Activated CD4-positive, alpha-beta T cell treated with anti-CD3 and anti-CD28 coated beads for 36 hours (primary cell): ENCODE measurements at regions of chr5 and their contacts with region 1.

Region 1: GRCh38 chr5:140564196-140565023 is at the starts of genes APBB3 and SLC35A4:
- DNase-seq: peak; percentile 96
- ATAC-seq: peak; percentile 95
- H3K4me3 Mint-ChIP-seq: peak within 1 kb of the TSS; percentile 98
- H3K27ac Mint-ChIP-seq: peak within 1 kb of the TSS; percentile 99
- H3K4me1 Mint-ChIP-seq: peaks cover 49% of the 10 kb centered on the region
- H3K27me3 Mint-ChIP-seq: no peaks in the 10 kb centered on the region
- total RNA-seq, gene APBB3: 12.8 to 19.0 TPM
- total RNA-seq, gene SLC35A4: 61.8 to 65.4 TPM

Region 2: DNA sequence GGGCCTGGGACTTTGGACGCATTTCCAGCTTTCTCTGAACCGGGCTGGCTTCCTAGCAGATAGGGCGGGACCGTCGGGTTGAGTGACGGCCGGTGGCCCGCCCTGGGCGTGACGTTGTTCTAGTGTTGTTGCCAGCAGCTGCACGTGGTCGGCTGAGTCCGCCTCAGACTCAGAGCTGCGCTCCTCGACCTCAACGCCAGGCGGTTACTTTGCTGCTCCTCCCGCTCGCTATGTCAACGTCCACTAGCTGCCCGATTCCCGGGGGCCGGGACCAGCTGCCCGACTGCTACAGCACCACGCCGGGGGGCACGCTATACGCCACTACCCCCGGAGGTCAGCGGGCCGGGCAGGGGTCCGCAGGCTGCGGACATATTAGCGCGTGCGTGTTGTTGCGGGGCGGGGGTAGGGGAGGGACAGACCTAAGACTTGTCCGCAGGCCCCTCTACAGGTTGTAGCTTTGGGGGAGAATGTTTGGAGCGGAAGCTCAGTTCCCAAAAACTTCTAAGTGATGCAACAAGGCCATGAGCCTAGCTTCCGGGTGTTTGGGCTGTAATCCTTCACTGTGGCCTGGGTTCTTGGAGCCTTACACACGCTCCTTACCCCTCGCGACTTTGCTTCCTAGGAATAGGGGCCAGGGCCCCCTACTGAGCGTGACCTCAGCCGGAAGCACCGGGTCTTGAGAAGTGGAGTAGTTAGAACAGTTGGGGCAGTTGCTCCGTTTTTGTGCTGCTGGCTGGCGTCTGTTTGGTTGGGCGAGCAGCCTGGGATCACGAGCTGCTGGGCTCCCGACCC is 16.7 kb before region 1 on chr5 and contains the start of gene EIF4EBP3:
- CTCF ChIA-PET with region 1: interaction called, 5 read pairs
- POLR2A ChIA-PET with region 1: no interaction called
- intact Hi-C with region 1: loop called (anchors 1 to 2 kb)
- DNase-seq: peak; percentile 93
- ATAC-seq: peak; percentile 99
- H3K4me3 Mint-ChIP-seq: peak within 1 kb of the TSS; percentile 82
- H3K27ac Mint-ChIP-seq: peak within 1 kb of the TSS; percentile 93
- H3K4me1 Mint-ChIP-seq: peaks cover 38% of the 10 kb centered on the region
- H3K27me3 Mint-ChIP-seq: no peaks in the 10 kb centered on the region
- total RNA-seq, gene EIF4EBP3: 15.8 to 17.3 TPM

Region 3: GRCh38 chr5:140639148-140639979 is 75.0 kb after region 1 on chr5 and contains the start of gene TMCO6:
- CTCF ChIA-PET with region 1: interaction called, 7 read pairs
- POLR2A ChIA-PET with region 1: no interaction called
- intact Hi-C with region 1: loop called (anchors 1 kb)
- DNase-seq: peak; percentile 99
- ATAC-seq: peak; percentile 94
- H3K4me3 Mint-ChIP-seq: peak within 1 kb of the TSS; percentile 93
- H3K27ac Mint-ChIP-seq: peak within 1 kb of the TSS; percentile 95
- H3K4me1 Mint-ChIP-seq: peaks cover 39% of the 10 kb centered on the region
- H3K27me3 Mint-ChIP-seq: no peaks in the 10 kb centered on the region
- total RNA-seq, gene TMCO6: 36.5 to 36.6 TPM

Region 4: DNA sequence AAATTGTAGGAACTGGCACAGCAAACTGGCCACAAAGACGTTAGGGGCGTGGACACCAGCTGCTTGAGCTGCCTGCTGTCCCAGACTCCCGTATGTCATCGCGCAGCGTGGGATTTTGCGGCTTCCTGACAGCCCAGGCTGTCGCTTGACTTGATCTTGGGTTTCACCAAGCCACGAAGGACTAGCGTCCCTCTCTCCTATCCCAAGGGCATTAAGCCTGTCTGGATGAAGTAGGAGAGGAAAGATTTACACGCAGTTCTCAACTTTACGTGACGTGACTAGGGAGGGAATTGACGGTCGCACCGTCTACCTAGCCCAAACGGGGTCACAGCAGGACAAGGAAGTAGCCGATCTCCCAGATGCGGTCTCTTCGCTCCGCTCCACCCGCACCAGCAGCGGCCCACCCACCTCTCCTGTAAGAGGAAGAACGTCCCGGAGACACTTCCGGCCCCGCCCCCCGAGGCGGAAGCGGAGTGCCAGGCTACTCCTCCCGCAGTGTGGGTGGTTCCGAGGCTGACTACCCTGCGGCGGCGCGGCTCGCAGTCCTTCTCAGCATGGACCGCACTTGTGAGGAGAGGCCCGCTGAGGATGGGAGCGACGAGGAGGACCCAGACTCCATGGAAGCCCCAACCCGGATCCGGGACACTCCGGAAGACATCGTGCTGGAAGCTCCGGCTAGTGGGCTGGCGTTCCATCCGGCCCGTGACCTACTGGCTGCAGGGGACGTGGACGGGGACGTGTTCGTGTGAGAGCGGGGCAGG is 100.1 kb after region 1 on chr5 and contains the start of gene WDR55:
- CTCF ChIA-PET with region 1: no interaction called
- POLR2A ChIA-PET with region 1: no interaction called
- intact Hi-C with region 1: loop called (anchors 1 kb)
- DNase-seq: peak; percentile 97
- ATAC-seq: peak; percentile 96
- H3K4me3 Mint-ChIP-seq: peak within 1 kb of the TSS; percentile 98
- H3K27ac Mint-ChIP-seq: peak within 1 kb of the TSS; percentile 96
- H3K4me1 Mint-ChIP-seq: peaks cover 28% of the 10 kb centered on the region
- H3K27me3 Mint-ChIP-seq: no peaks in the 10 kb centered on the region
- total RNA-seq, gene WDR55: 25.9 to 31.7 TPM

Region 5: DNA sequence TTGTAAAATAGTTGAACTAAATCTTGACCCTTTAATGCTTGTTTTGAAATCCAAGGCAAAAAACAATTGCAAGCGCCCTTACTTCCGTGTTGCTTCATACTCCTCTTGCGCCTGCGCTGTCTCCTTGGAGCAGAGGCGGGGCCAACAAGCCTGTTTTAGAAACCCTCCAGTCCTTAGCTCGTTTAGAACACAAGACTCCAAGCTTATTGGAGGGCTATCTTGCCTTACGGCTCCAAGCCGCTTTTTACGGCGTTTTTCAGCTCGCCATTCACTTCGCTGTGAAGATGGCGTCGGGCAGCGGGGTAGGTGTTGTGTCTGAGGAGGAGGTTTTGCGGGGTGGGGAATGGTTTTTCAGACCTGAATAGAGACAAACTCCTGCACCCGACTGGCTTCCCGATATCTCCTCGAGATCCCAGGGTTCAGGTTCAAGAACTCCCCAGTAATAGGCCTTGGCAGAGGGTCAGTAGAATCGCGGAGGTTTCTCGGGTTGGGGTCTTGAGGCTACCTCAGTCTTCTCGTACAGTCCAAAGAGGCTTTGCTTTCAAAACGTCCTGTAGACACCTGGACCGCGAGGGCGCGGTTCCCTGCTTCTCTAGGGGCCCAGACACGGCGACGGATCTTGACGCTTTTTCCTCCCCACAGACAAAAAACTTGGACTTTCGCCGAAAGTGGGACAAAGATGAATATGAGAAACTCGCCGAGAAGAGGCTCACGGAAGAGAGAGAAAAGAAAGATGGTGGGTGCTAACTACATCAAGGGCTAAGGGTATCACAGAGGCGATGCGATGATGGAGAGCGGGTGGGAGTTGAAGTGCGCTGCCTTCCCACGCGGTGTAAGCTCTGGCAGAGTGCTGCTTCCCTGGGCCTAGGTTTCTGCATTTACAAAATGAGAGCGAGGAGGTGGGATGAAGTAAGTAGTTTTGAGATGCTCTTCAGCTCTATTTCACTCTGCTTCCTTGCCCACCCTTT is 136.1 kb after region 1 on chr5 and contains the start of gene ZMAT2:
- CTCF ChIA-PET with region 1: interaction called, 3 read pairs
- POLR2A ChIA-PET with region 1: interaction called, 3 read pairs
- intact Hi-C with region 1: loop called (anchors 1 to 5 kb)
- DNase-seq: peak; percentile 96
- ATAC-seq: peak; percentile 100
- H3K4me3 Mint-ChIP-seq: peak within 1 kb of the TSS; percentile 94
- H3K27ac Mint-ChIP-seq: peak within 1 kb of the TSS; percentile 94
- H3K4me1 Mint-ChIP-seq: peaks cover 24% of the 10 kb centered on the region
- H3K27me3 Mint-ChIP-seq: no peaks in the 10 kb centered on the region
- total RNA-seq, gene ZMAT2: 49.9 to 55.3 TPM